ENCODE measurements at regions of chr1 and their contacts with region 1.

Region 1: DNA sequence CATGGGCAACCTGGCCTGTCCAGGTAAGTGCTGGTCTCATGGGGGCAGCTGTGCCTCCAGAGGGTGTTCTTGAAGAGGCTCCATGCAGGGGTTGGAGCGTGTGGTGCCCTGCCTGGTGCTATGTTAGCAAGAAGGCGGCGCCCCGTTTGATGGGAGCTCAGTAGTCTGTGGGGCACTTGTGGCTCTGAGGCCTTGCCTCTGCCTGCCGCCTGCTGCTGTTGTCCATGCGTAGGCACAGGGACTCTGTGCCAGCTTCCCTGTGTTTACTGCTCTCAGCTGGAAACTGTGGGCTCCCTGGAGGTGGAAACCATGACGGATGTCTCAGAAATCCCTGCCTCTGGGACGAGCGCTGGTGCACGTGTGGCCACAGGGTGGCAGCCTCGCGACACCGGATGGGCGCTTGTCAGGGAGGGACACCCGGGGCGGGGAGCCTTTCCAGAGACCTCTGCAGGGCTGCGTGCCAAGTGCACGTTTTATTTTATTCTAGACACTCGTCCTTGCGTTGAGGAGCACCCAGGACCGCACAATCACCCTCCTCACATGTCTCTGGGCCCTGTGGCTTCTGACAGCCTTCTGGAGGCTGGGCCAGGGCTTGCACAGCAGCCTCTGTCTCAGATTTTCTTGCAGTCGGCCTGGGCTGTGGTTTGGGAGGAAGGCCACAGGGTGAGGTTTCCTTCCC is 27.1 kb downstream of the SNAP47 start:
- DNase-seq: peak; percentile 93
- H3K4me3 ChIP-seq: no peak overlapping the region
- H3K27ac ChIP-seq: no peak overlapping the region
- H3K4me1 ChIP-seq: peaks cover 10% of the 10 kb centered on the region
- H3K27me3 ChIP-seq: no peaks in the 10 kb centered on the region
- CTCF ChIP-seq: peak; percentile 98

Region 2: DNA sequence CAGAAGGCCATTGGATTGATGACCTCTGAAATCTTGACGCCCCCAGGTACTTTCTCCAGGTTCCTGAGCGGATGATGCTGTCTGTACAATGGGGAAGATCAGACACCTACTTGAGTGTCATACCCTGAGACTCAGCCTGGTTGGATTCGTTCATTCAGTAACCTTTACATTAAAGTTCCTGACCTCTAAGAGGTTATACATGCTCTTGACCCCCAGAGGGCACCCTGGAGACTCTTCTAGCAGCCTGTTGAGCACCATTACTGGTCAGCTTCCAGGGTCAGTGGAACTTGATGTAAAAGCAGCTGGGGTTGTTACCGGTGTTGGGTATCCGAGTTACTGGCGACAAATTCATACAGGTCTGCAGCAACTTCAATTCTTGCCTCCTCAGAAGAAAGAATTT is 313.3 kb before region 1 on chr1:
- CTCF ChIA-PET with region 1: no interaction called
- POLR2A ChIA-PET with region 1: no interaction called
- intact Hi-C with region 1: no loop called
- DNase-seq: peak; percentile 28
- H3K4me3 ChIP-seq: no peak overlapping the region
- H3K27ac ChIP-seq: no peak overlapping the region
- H3K4me1 ChIP-seq: peaks cover 5% of the 10 kb centered on the region
- H3K27me3 ChIP-seq: peaks cover 3% of the 10 kb centered on the region
- CTCF ChIP-seq: peak; percentile 50

Region 3: GRCh38 chr1:227482023-227482299 is 280.4 kb before region 1 on chr1:
- CTCF ChIA-PET with region 1: no interaction called
- POLR2A ChIA-PET with region 1: no interaction called
- intact Hi-C with region 1: loop called (anchors 5 kb)
- DNase-seq: no peak
- H3K4me3 ChIP-seq: no peak overlapping the region
- H3K27ac ChIP-seq: no peak overlapping the region
- H3K4me1 ChIP-seq: no peaks in the 10 kb centered on the region
- H3K27me3 ChIP-seq: peaks cover 12% of the 10 kb centered on the region
- CTCF ChIP-seq: no peak

Region 4: DNA sequence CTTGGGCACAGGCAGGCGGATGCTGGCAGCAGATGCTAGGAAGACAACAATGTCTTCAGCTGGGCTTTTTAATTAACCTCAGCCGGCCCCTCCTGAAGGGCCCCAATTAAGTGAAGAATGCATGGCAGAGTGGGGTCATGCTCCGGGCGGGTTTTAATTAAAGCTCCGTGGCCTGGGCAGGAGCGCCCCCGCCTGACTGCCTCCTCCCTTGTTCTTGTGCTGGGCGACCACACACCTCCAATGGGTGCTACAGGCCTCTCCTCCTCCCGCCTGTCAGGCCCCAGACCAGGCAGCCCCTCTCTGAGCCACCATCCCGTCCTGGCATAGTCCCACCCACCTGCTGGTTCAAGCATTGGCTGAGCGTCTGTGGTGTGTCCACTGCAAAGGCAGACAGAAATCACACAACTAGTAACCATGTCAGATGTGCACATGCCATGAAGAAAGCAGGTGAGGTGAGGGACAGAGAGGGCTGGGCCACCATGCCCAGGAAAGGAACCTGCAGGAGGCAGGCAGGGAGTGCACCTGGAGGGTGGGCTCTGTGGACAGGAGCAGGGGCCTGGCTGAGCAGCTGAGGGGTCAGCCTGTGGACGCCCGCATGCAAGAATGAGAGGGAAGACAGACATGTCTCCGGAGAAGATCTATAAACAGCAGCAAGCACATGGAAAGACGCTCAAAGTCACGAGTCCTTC is 311.6 kb after region 1 on chr1:
- CTCF ChIA-PET with region 1: no interaction called
- POLR2A ChIA-PET with region 1: no interaction called
- intact Hi-C with region 1: loop called (anchors 10 kb)
- DNase-seq: no peak
- H3K4me3 ChIP-seq: no peak overlapping the region
- H3K27ac ChIP-seq: no peak overlapping the region
- H3K4me1 ChIP-seq: no peaks in the 10 kb centered on the region
- H3K27me3 ChIP-seq: peaks cover 20% of the 10 kb centered on the region
- CTCF ChIP-seq: peak; percentile 37

Measured in A673 (cell line).